ENCODE measurements at regions of chr7 and their contacts with region 1.

Region 1: GRCh38 chr7:43582503-43583423 is at the start of gene STK17A:
- DNase-seq: peak; percentile 90
- H3K4me3 ChIP-seq: peak within 1 kb of the TSS; percentile 82 to 98 (median 96)
- H3K27ac ChIP-seq: peak within 1 kb of the TSS; percentile 98
- H3K4me1 ChIP-seq: peaks cover 13% of the 10 kb centered on the region
- H3K27me3 ChIP-seq: no peaks in the 10 kb centered on the region
- CTCF ChIP-seq: peak; percentile 92 to 99
- total RNA-seq, gene STK17A: 109 to 140 TPM

Region 2: GRCh38 chr7:42833411-42833810 is 749.4 kb before region 1 on chr7:
- CTCF ChIA-PET with region 1: no interaction called
- dilution Hi-C with region 1: no loop called
- in situ Hi-C with region 1: no loop called
- intact Hi-C with region 1: no loop called
- DNase-seq: no peak
- H3K4me3 ChIP-seq: no peak overlapping the region
- H3K27ac ChIP-seq: no peak overlapping the region
- H3K4me1 ChIP-seq: no peaks in the 10 kb centered on the region
- H3K27me3 ChIP-seq: no peaks in the 10 kb centered on the region
- CTCF ChIP-seq: no peak

Region 3: GRCh38 chr7:43572516-43573049 is 10.2 kb before region 1 on chr7:
- CTCF ChIA-PET with region 1: interaction called, 19 read pairs
- dilution Hi-C with region 1: no loop called
- in situ Hi-C with region 1: no loop called
- intact Hi-C with region 1: loop called (anchors 1 kb)
- DNase-seq: peak; percentile 99
- H3K4me3 ChIP-seq: no peak overlapping the region
- H3K27ac ChIP-seq: peak overlapping the region; percentile 99
- H3K4me1 ChIP-seq: peaks cover 52% of the 10 kb centered on the region
- H3K27me3 ChIP-seq: no peaks in the 10 kb centered on the region
- CTCF ChIP-seq: no peak

Region 4: DNA sequence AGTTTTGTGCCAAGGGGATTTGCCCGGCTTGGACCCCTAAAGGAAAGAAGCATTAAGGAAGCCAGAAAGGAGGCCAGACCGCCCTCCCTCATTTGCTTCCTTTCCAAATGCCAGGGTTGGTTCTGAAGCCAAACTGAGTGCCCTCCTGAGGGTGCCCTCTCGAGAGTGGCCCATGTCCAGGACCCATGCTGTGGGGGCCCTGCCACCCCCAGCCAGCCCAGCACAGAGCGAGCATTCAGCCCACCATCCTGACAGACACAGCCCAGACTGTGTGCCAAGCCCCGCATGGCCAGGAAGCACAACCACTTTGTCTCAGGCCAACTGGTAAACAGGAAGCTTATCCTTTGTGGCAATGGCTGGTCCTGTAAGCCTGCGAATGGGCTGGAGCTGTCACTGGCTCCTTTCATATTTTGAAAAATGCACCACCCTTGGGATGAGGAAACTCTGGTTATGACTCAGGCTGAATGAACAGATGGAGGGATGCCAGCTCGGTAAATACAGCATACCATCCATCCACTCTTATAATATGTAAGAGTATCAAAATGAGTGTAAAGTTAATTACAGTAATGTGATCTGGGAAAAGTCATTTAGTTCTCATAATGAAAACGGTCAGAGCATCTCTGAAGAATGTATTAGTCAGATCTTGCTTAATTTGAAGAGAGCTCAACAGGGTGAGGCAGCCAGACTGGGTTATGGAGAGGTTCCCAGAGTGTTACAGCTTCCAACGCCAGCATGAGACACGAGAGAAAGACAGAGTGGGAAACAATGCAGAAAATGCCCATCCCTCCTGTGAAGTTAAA is 65.1 kb after region 1 on chr7:
- CTCF ChIA-PET with region 1: interaction called, 8 read pairs
- dilution Hi-C with region 1: loop called (anchors 5 kb)
- in situ Hi-C with region 1: no loop called
- intact Hi-C with region 1: loop called (anchors 1 kb)
- DNase-seq: peak; percentile 97
- H3K4me3 ChIP-seq: peak overlapping the region in 1 of 3 experiments; percentile 26
- H3K27ac ChIP-seq: peak overlapping the region; percentile 91
- H3K4me1 ChIP-seq: peaks cover 59% of the 10 kb centered on the region
- H3K27me3 ChIP-seq: no peaks in the 10 kb centered on the region
- CTCF ChIP-seq: no peak

Region 5: DNA sequence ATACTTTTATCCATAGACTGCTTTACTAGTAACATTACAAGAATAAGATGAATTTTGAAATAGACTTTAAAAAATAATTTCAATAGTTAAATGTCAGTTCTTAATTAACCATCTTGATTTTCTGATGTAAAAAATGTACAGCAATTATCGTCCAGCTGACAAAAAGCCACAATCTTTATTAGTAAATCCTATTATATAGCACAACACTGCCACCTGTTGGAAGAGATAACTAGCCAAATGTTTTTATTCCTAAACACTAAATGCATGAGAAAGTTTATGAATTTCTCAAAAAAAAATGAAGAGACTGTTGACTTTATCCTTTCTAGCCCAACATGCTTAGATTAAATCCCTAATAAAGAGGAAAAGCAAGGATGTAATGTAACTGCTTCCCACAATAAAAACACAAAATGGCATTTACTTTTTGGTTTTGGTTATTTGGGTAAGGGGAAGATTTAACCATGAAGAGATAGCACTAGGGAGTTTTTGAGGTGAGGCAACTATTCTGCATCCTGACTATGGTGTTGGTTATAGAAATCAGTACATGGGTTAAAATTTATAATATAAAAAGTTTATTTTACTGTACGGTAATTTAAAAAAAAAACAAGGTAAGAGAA is 138.5 kb after region 1 on chr7:
- CTCF ChIA-PET with region 1: interaction called, 7 read pairs
- dilution Hi-C with region 1: no loop called
- in situ Hi-C with region 1: loop called in 1 of 2 experiments (anchors 25 kb)
- intact Hi-C with region 1: loop called (anchors 1 kb)
- DNase-seq: no peak
- H3K4me3 ChIP-seq: no peak overlapping the region
- H3K27ac ChIP-seq: no peak overlapping the region
- H3K4me1 ChIP-seq: peaks cover 4% of the 10 kb centered on the region
- H3K27me3 ChIP-seq: no peaks in the 10 kb centered on the region
- CTCF ChIP-seq: peak; percentile 50 to 55

Measured in mammary epithelial cell (primary cell).